ENCODE measurements at regions of chr10 and their contacts with region 1.

Region 1: GRCh38 chr10:101840741-101841453 is 2.7 kb downstream of the KCNIP2 start:
- DNase-seq: no peak
- ATAC-seq: peak; percentile 89
- H3K4me3 ChIP-seq: peak overlapping the region in 1 of 2 experiments; percentile 41; a peak in 1 of 4 replicates
- H3K27ac ChIP-seq: no peak overlapping the region
- H3K4me1 ChIP-seq: peaks cover 5% of the 10 kb centered on the region; the same call in 1 of the 2 replicates
- H3K27me3 ChIP-seq: no peaks in the 10 kb centered on the region
- CTCF ChIP-seq: peak; percentile 99

Region 2: DNA sequence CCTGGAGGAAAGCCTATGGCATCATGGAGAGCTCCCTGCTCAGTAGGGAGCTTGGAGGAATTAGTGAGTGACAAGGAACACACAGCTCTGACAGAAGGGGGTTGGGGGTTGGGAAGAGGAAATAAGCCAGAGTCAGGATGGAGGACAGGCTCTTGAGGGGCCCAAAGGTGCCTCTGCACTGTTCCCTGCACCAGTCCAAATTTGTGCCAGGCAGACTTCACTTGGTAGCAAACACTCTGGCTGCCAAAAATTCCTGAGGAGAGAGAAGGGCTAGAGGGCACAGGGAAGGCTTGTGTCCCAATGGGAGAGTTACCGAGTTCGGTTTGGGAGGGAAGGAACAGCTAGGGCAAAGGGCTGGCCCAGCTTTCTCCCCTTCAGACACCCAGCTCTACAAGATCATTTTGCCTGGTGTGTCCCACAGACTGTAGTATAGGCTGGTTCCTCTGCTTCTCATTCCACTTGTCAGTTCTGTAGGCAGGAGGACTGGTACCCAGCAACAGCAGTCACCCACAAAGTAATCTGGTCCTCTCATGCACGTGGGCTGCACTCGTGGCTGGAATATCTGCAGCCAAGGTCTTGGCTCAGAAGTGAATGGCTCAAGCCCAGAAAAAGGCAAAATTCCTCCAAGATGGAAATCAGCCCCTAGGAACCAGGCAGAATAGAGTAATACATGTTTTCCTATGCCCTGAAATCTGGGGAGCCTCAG is 10.7 kb after region 1 on chr10:
- CTCF ChIA-PET with region 1: interaction called, 21 read pairs
- POLR2A ChIA-PET with region 1: no interaction called
- in situ Hi-C with region 1: no loop called
- intact Hi-C with region 1: no loop called
- DNase-seq: no peak
- ATAC-seq: no peak
- H3K4me3 ChIP-seq: no peak overlapping the region
- H3K27ac ChIP-seq: no peak overlapping the region
- H3K4me1 ChIP-seq: no peaks in the 10 kb centered on the region
- H3K27me3 ChIP-seq: no peaks in the 10 kb centered on the region
- CTCF ChIP-seq: no peak

Region 3: DNA sequence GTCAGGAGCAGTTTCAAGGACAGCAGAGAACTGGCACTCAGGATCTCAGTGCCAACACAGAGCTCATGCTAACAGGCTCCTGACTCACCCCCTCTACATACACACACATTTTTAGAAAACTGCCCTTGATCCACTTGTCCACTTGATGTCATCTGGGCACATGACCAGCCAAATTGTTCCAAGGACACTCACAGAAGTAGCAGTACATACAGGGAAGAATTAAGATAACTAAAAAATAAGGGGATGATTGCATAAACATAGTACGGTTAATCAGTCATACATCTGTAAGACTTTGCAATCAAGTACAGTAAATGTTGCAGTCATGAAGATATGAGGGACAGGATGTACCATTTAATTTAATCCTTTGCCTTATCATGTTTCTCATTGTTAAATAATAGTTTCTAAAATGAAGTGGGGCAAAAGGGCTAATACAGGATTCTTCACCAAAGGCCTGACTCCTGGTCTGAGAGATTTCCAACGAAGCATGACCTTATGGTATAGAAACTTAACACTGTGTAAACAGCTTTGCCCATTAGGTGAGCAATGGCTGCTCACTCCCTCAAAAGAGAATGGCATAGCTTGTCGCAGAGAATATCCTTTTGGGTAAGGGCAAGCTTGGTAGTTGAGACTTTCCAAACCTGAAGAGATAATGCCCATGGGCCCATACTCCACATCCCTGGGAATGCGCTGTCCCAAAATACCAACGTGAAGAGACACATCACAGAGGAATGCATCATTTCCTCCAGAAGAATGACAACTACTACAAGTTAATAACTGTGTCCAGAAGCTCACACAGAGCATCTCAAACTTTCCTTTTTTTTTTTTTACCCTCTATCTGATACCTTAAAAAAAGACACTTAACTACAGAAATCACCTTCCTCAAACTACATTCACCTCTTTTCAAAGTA is 120.9 kb after region 1 on chr10:
- CTCF ChIA-PET with region 1: interaction called, 11 read pairs
- POLR2A ChIA-PET with region 1: no interaction called
- in situ Hi-C with region 1: no loop called
- intact Hi-C with region 1: no loop called
- DNase-seq: no peak
- ATAC-seq: no peak
- H3K4me3 ChIP-seq: no peak overlapping the region
- H3K27ac ChIP-seq: no peak overlapping the region
- H3K4me1 ChIP-seq: no peaks in the 10 kb centered on the region
- H3K27me3 ChIP-seq: no peaks in the 10 kb centered on the region
- CTCF ChIP-seq: no peak

Region 4: DNA sequence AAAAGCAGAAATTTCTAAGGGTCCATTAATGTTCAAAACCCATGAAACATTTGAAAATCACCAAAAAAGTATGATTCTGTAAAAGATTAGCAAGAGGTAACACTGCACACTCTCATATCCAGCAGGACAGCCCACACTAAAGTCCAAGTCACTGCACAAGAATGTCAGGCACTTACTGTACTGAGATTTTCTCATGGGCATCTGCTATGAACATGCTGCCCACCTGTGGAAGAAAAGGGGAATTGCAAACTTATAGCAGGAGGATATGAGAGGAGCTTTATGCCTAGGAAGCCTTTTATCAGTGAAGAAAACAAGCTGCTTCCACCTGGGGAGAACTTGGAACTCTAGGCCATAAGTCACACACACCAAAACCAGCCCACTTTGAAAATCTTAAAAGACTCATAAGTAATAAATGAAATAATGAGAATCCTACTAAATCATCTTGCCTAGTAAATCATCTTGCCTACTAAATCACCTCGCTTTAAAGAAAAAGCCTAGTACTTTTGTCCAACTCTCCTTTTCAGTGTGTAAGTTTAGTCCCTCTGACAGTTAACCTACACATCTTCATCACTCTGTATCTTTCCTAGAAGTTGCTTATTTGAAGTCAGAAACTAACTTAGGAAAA is 169.0 kb after region 1 on chr10:
- CTCF ChIA-PET with region 1: interaction called, 48 read pairs
- POLR2A ChIA-PET with region 1: interaction called, 5 read pairs
- in situ Hi-C with region 1: no loop called
- intact Hi-C with region 1: loop called (anchors 1 kb)
- DNase-seq: peak; percentile 90
- ATAC-seq: peak; percentile 98
- H3K4me3 ChIP-seq: no peak overlapping the region
- H3K27ac ChIP-seq: no peak overlapping the region
- H3K4me1 ChIP-seq: peaks cover 10% of the 10 kb centered on the region
- H3K27me3 ChIP-seq: no peaks in the 10 kb centered on the region
- CTCF ChIP-seq: peak; percentile 98

Region 5: GRCh38 chr10:102064503-102064867 is 223.6 kb after region 1 on chr10:
- CTCF ChIA-PET with region 1: no interaction called
- POLR2A ChIA-PET with region 1: no interaction called
- in situ Hi-C with region 1: no loop called
- intact Hi-C with region 1: no loop called
- DNase-seq: no peak
- ATAC-seq: no peak
- H3K4me3 ChIP-seq: peak overlapping the region; percentile 77
- H3K27ac ChIP-seq: peak overlapping the region; percentile 88
- H3K4me1 ChIP-seq: peaks cover 20% of the 10 kb centered on the region
- H3K27me3 ChIP-seq: no peaks in the 10 kb centered on the region
- CTCF ChIP-seq: no peak

Region 6: GRCh38 chr10:102101152-102101551 is 260.3 kb after region 1 on chr10:
- CTCF ChIA-PET with region 1: interaction called, 12 read pairs
- POLR2A ChIA-PET with region 1: interaction called, 6 read pairs
- in situ Hi-C with region 1: no loop called
- intact Hi-C with region 1: no loop called
- DNase-seq: no peak
- ATAC-seq: peak; percentile 71; the same call in 1 of the 2 replicates
- H3K4me3 ChIP-seq: no peak overlapping the region
- H3K27ac ChIP-seq: no peak overlapping the region
- H3K4me1 ChIP-seq: no peaks in the 10 kb centered on the region
- H3K27me3 ChIP-seq: no peaks in the 10 kb centered on the region
- CTCF ChIP-seq: no peak

Measured in Panc1 (cell line).